Naive thymus-derived CD8-positive, alpha-beta T cell (primary cell): ENCODE measurements at regions of chr1 and their contacts with region 1.

Region 1: GRCh38 chr1:248873409-248873992 is 14.6 kb upstream of the ZNF692 start:
- DNase-seq: peak; percentile 74 to 96 (median 91)
- ATAC-seq: peak; percentile 79
- H3K4me3 Mint-ChIP-seq: peak overlapping the region; percentile 93 to 99 (median 96)
- H3K27ac Mint-ChIP-seq: peak overlapping the region; percentile 96 to 100 (median 98)
- H3K4me1 Mint-ChIP-seq: peaks cover 16 to 26% (median 20%) of the 10 kb centered on the region in 4 donors
- H3K27me3 Mint-ChIP-seq: peaks cover 0 to 13% (median 0%) of the 10 kb centered on the region in 5 donors

Region 2: DNA sequence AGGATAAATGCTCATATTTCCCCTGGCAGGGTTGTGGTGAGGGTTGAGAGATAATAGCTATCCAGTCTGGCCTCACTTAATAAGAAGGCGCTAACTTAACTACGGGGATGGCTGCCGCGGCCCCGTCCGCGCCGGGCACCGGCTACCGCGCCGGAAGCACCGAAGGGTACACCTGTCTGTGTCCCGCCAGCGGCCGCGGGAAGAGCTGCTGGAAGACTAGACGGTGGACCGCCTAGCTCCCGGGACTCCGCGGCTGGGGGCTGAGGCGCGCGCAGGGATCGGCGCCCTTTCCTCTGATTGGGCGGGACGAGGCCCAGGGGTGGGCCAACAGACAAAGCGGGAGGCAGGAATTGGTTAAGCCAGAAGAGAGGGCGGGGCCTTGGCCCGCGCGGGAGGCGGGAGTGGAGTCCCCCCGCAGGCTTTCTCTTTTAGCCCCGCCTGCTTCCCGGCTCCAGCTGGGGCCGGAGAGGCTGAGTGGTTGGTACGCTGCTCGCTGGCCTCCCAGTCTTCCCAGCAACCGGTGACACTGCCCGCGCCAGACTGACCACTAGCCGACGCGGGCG is 35.6 kb before region 1 on chr1 and contains the start of gene ZNF672:
- POLR2A ChIA-PET with region 1: interaction called, 16 read pairs
- DNase-seq: peak; percentile 88 to 96 (median 92)
- ATAC-seq: peak; percentile 82 to 85
- H3K4me3 Mint-ChIP-seq: peak within 1 kb of the TSS in 2 of 10 donors; percentile 92 to 95
- H3K27ac Mint-ChIP-seq: peak within 1 kb of the TSS in 6 of 10 donors; percentile 94 to 99 (median 98)
- H3K4me1 Mint-ChIP-seq: peaks cover 12 to 32% (median 30%) of the 10 kb centered on the region in 4 donors
- H3K27me3 Mint-ChIP-seq: peaks cover 0 to 7% (median 2%) of the 10 kb centered on the region in 5 donors
- polyA plus RNA-seq, gene ZNF672: 17.9 to 25.6 (median 19.6) TPM

Region 3: DNA sequence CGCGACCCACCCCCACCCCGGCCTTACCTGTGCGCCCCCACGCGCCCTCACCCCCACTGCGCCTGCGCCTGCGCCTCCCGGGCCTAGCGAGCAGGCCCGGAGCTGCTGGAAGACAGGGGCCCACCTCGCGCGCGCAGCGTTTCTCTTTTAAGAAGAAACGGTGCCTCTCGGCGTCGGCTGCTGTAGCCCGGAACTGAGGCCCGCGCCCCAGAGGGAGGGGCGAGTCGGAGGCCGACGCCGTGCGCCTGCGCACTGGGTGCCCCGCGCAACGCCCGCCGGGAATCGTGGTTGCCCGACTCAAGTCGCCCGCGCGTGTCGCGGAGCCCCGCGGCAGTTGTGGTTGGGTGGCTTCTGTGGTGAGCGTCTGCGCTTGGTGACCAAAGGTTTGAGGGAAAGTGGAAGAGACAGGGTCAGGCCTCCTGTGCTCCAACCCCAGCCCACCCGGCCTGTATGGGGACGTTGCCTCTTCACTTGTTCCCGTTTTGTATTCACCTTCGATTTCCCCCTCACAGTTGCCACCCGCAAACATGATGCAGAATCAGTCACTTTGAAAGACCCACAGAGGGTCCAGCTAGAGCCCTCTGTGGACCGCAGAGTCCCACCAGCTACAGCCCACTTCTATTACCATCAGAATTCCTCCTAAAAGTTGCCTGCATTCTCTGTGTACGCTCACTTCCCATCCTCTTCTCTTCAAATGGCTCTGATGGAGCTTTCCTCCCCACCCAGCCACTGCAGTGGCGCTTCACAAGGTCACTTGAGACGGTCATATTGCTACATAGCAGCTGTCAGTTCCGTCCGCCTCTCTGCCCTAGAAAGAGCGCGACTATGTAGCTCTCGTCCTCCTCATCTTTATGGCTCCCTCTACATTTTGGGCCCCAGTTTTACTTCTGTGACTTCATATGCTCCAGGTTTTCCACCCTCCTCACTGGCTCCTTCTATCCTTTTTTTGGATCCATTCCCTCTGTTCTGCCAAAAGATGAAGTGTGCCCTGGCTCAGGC is 14.3 kb before region 1 on chr1 and contains the start of gene ZNF692:
- POLR2A ChIA-PET with region 1: interaction called, 33 read pairs
- DNase-seq: peak; percentile 95 to 99 (median 96)
- ATAC-seq: peak; percentile 79 to 89
- H3K4me3 Mint-ChIP-seq: peak within 1 kb of the TSS; percentile 78 to 97 (median 90)
- H3K27ac Mint-ChIP-seq: peak within 1 kb of the TSS; percentile 88 to 99 (median 96)
- H3K4me1 Mint-ChIP-seq: peaks cover 44 to 64% (median 61%) of the 10 kb centered on the region in 4 donors
- H3K27me3 Mint-ChIP-seq: no peaks in the 10 kb centered on the region
- polyA plus RNA-seq, gene ZNF692: 5.2 to 9.3 (median 5.9) TPM